HCT116 (cell line): ENCODE measurements at regions of chr6 and their contacts with region 1.

Region 1: GRCh38 chr6:7401075-7401474 is 11.5 kb downstream of the RIOK1 start:
- DNase-seq: no peak
- ATAC-seq: no peak
- H3K4me3 ChIP-seq: no peak overlapping the region
- H3K27ac ChIP-seq: no peak overlapping the region
- H3K4me1 ChIP-seq: no peaks in the 10 kb centered on the region
- H3K27me3 ChIP-seq: no peaks in the 10 kb centered on the region
- CTCF ChIP-seq: no peak
- POLR2A ChIP-seq: no peak
- RAD21 ChIP-seq: no peak

Region 2: GRCh38 chr6:6643398-6643797 is 757.7 kb before region 1 on chr6:
- CTCF ChIA-PET with region 1: no interaction called
- POLR2A ChIA-PET with region 1: no interaction called
- RAD21 ChIA-PET with region 1: no interaction called
- intact Hi-C with region 1: no loop called
- DNase-seq: no peak
- ATAC-seq: no peak
- H3K4me3 ChIP-seq: no peak overlapping the region
- H3K27ac ChIP-seq: no peak overlapping the region
- H3K4me1 ChIP-seq: no peaks in the 10 kb centered on the region
- H3K27me3 ChIP-seq: peaks cover 19% of the 10 kb centered on the region
- CTCF ChIP-seq: no peak
- POLR2A ChIP-seq: no peak
- RAD21 ChIP-seq: no peak

Region 3: DNA sequence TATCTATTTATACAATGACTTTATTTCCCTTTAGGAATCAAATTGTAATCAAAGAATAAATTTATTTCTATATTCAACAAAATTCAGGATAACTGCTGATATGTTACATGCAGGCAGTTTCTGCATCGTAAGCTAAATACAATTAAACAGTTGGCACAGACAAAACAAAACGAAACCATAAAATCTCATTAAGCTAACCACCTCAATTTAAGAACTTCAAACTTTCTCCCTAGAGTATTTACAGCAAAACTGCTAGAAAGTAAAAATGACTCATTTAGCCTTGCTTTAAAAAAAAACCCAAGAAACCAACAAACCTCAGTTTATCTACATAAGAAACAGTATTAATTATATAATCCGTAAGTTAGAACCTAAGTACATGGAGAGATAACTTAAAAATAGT is 105.2 kb before region 1 on chr6:
- CTCF ChIA-PET with region 1: no interaction called
- POLR2A ChIA-PET with region 1: no interaction called
- RAD21 ChIA-PET with region 1: no interaction called
- intact Hi-C with region 1: loop called (anchors 5 kb)
- DNase-seq: no peak
- ATAC-seq: no peak
- H3K4me3 ChIP-seq: no peak overlapping the region
- H3K27ac ChIP-seq: no peak overlapping the region
- H3K4me1 ChIP-seq: no peaks in the 10 kb centered on the region
- H3K27me3 ChIP-seq: no peaks in the 10 kb centered on the region
- CTCF ChIP-seq: no peak
- POLR2A ChIP-seq: no peak
- RAD21 ChIP-seq: no peak